MCF 10A (cell line): ENCODE measurements at regions of chr2 and their contacts with region 1.

Region 1: GRCh38 chr2:119702918-119703401 is 24.0 kb downstream of the TMEM177 start:
- DNase-seq: peak; percentile 75
- H3K4me3 Mint-ChIP-seq: no peak overlapping the region
- H3K27ac Mint-ChIP-seq: no peak overlapping the region
- H3K4me1 Mint-ChIP-seq: no peaks in the 10 kb centered on the region
- H3K27me3 Mint-ChIP-seq: no peaks in the 10 kb centered on the region
- CTCF ChIP-seq: peak; percentile 91

Region 2: GRCh38 chr2:119659601-119660342 is 43.2 kb before region 1 on chr2:
- CTCF ChIA-PET with region 1: no interaction called
- POLR2A ChIA-PET with region 1: no interaction called
- intact Hi-C with region 1: no loop called
- DNase-seq: peak; percentile 62
- H3K4me3 Mint-ChIP-seq: no peak overlapping the region
- H3K27ac Mint-ChIP-seq: no peak overlapping the region
- H3K4me1 Mint-ChIP-seq: no peaks in the 10 kb centered on the region
- H3K27me3 Mint-ChIP-seq: peaks cover 20% of the 10 kb centered on the region
- CTCF ChIP-seq: peak; percentile 86

Region 3: GRCh38 chr2:119759451-119760236 is 56.7 kb after region 1 on chr2 and contains the start of gene PTPN4:
- CTCF ChIA-PET with region 1: interaction called, 4 read pairs
- POLR2A ChIA-PET with region 1: interaction called, 4 read pairs
- intact Hi-C with region 1: loop called (anchors 2 kb)
- DNase-seq: peak; percentile 98
- H3K4me3 Mint-ChIP-seq: peak within 1 kb of the TSS; percentile 81
- H3K27ac Mint-ChIP-seq: peak within 1 kb of the TSS; percentile 89
- H3K4me1 Mint-ChIP-seq: peaks cover 45% of the 10 kb centered on the region
- H3K27me3 Mint-ChIP-seq: no peaks in the 10 kb centered on the region
- CTCF ChIP-seq: no peak
- total RNA-seq, gene PTPN4: 21.1 and 27.2 TPM in 2 replicates

Region 4: DNA sequence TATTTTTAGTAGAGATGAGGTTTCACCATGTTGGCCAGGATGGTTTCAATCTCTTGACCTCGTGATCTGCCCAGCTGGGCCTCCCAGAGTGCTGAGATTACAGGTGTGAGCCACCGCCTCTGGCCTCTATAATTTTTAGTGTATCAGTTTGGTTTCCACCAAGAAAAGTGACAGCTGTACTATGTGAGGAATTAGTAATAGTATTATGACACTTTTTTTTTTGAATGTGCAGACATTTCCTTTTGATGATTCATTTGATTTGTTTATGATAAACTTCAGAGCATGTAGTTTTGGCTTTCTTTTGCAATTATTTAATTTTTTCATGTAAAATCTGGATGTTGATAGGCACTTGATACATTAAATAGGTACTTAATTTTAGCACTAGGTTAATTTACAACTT is 118.3 kb after region 1 on chr2:
- CTCF ChIA-PET with region 1: interaction called, 14 read pairs
- POLR2A ChIA-PET with region 1: no interaction called
- intact Hi-C with region 1: loop called (anchors 1 kb)
- DNase-seq: no peak
- H3K4me3 Mint-ChIP-seq: no peak overlapping the region
- H3K27ac Mint-ChIP-seq: no peak overlapping the region
- H3K4me1 Mint-ChIP-seq: peaks cover 10% of the 10 kb centered on the region
- H3K27me3 Mint-ChIP-seq: no peaks in the 10 kb centered on the region
- CTCF ChIP-seq: no peak

Region 5: GRCh38 chr2:119826370-119826961 is 123.5 kb after region 1 on chr2:
- CTCF ChIA-PET with region 1: interaction called, 14 read pairs
- POLR2A ChIA-PET with region 1: interaction called, 3 read pairs
- intact Hi-C with region 1: loop called (anchors 1 kb)
- DNase-seq: peak; percentile 51
- H3K4me3 Mint-ChIP-seq: no peak overlapping the region
- H3K27ac Mint-ChIP-seq: no peak overlapping the region
- H3K4me1 Mint-ChIP-seq: peaks cover 18% of the 10 kb centered on the region
- H3K27me3 Mint-ChIP-seq: no peaks in the 10 kb centered on the region
- CTCF ChIP-seq: peak; percentile 50

Region 6: DNA sequence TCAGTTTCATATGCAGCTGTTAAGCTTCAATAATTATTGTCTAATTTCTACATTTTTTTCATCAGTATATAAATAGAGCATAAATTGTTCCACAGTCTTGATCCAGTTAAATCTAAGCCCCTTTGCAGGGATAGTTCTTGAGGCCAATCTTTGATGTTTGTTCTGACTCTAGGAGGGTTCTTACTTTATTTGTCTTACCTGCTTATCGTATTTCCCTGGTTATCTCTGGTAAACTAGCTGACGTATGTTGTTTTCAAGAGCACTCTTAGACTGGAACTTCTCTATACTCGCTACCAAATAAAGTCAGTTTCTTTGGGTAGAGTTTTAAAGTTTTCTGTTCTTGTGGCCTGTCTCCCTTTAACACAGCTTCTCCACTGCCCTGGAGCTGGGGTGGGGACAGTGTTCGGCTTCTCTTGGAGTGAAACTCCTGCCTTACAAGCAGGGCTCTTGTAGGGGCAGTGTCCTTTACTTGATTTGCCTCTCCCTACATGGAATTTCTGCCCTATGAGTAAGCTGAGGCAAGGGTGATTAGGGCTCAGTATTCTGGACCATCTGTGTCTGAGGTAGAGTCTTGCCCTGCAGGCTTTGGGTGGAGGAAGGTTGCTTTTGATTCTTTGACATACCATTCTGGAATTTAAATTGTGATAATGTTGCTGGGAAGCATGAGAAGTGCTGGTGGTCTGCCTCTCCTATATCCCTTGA is 147.0 kb after region 1 on chr2:
- CTCF ChIA-PET with region 1: no interaction called
- POLR2A ChIA-PET with region 1: no interaction called
- intact Hi-C with region 1: no loop called
- DNase-seq: no peak
- H3K4me3 Mint-ChIP-seq: no peak overlapping the region
- H3K27ac Mint-ChIP-seq: no peak overlapping the region
- H3K4me1 Mint-ChIP-seq: peaks cover 6% of the 10 kb centered on the region
- H3K27me3 Mint-ChIP-seq: no peaks in the 10 kb centered on the region
- CTCF ChIP-seq: no peak

Region 7: DNA sequence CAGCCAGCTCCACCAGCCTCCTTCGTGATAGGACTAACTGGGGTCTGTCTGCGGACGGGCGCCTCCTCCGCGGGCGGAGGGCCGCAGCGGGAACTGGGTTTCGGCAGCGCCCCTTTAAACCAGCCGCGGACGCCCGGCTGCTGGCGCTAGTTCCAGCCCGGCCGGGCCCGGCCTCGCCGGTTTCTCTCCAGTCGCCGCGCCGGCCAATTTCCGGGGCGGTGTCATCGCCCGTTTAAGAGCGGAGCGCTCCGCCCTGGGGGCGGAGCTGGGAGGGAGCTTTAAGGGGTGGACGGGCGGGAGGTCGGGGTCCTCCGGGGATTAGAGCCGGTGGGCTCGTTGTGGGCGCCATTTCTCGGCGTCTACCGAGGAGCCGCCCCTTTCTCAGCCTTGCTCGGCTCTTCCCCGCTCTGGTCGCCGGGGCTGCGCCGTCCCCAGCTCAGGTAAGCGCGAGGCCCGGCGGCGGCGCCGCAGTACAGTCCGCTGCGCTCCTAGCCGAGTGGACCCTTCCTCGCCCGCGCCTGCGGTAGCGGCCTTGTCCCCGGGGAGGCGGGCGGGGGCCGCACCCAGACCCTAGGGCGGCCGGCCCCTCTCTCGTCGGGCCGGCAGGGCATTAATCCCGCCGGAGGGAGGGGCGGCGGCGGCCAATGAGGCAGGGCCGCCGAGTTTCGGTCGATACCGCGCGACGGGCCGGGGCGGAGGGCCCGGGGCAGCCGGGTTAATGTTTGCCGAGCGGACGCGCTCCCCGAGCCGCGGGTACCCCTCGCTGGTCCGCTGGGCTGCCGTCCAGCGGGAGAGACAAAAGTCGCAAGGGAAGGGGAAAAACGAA is 310.0 kb after region 1 on chr2 and contains the start of gene EPB41L5:
- CTCF ChIA-PET with region 1: no interaction called
- POLR2A ChIA-PET with region 1: no interaction called
- intact Hi-C with region 1: loop called (anchors 1 kb)
- DNase-seq: peak; percentile 96
- H3K4me3 Mint-ChIP-seq: peak within 1 kb of the TSS; percentile 66
- H3K27ac Mint-ChIP-seq: peak within 1 kb of the TSS; percentile 54
- H3K4me1 Mint-ChIP-seq: peaks cover 26% of the 10 kb centered on the region
- H3K27me3 Mint-ChIP-seq: no peaks in the 10 kb centered on the region
- CTCF ChIP-seq: no peak
- total RNA-seq, gene EPB41L5: 19.0 and 22.8 TPM in 2 replicates

Region 8: GRCh38 chr2:120109186-120110061 is 406.5 kb after region 1 on chr2:
- CTCF ChIA-PET with region 1: no interaction called
- POLR2A ChIA-PET with region 1: no interaction called
- intact Hi-C with region 1: loop called (anchors 2 kb)
- DNase-seq: peak; percentile 65
- H3K4me3 Mint-ChIP-seq: peak overlapping the region; percentile 34
- H3K27ac Mint-ChIP-seq: peak overlapping the region; percentile 28
- H3K4me1 Mint-ChIP-seq: peaks cover 44% of the 10 kb centered on the region
- H3K27me3 Mint-ChIP-seq: no peaks in the 10 kb centered on the region
- CTCF ChIP-seq: peak; percentile 64

Region 9: DNA sequence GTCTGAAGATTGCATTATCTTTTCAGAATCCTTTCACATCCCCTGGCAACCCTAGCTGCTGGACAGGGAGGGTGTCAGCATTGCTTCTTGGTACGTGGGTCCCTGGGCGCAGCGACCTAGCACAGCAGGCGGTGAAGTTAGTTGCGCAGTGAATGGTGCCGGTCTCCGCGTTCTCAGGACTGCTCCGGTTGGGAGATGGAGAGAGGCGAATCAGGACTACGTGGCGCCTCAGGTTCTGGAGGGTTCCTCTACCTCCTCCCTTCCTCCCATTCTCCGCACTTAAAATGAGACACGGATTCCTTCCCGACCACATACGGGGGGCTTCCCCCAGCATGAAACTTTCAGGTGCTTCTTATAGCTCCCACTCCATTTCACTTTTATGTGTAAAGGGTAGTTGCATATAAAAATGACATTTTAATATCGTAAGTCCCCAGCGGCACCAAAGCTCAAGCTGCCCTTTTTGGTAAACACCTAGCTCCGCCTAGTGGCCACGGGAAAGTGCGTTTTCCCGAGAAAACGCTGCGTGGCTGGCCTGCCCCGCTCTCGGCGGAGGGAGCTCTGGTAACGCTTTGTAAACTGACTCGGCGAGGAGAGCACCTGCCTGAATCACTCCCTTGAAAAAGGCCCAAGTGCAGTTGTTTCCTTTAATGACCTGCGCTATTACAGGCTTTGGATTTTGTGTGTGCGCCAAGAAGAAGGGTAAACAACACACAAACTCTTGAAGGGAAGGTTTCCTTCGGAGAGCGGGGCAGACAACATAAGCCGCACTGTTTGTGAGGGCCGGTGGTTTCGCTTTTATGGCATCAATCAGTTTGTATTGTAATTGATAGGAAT is 610.1 kb after region 1 on chr2:
- CTCF ChIA-PET with region 1: interaction called, 3 read pairs
- POLR2A ChIA-PET with region 1: no interaction called
- intact Hi-C with region 1: loop called (anchors 2 kb)
- DNase-seq: peak; percentile 78
- H3K4me3 Mint-ChIP-seq: peak overlapping the region; percentile 11
- H3K27ac Mint-ChIP-seq: no peak overlapping the region
- H3K4me1 Mint-ChIP-seq: no peaks in the 10 kb centered on the region
- H3K27me3 Mint-ChIP-seq: no peaks in the 10 kb centered on the region
- CTCF ChIP-seq: peak; percentile 87